Calu3 (cell line): ENCODE measurements at regions of chr22 and their contacts with region 1.

Region 1: DNA sequence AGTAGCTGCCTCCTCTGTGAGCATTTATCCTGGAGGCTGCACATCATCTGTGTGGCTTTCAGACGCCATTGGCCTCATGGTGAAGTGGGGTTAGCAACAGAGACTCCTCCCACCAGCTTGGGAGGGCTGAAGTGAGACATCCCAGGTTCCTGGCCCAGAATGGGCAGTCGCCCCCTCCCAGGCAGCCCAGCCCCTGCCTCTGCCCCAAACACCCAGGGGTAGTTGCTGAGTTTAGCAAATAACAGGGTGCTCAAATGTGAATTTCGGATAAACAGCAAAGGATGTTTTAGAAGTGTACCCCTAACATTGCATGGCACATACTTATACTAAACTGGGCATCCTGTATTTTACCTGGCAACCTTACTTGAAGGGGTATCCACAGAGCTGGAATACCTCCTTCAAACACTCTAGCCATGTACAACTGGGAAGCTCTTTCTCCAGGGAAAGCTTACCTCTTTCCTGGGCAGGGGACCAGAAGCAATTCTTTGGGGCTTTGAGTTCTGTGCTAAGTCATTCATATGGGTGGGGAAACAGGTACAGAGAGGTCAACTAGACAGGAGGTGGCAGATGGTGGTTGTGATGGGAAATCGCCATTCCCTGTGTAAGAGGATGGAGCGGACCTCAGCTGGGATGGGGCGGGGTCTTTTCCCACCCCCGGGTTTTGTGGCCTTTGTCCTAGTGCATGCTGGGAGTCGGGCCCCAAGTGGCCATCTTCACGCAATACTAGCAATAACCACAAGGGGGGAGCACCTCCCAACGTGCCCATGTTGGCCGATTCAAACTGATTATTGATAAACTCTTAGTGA is 19.3 kb downstream of the MTFP1 start:
- DNase-seq: peak; percentile 80
- H3K4me3 Mint-ChIP-seq: no peak overlapping the region
- H3K27ac Mint-ChIP-seq: peak overlapping the region; percentile 54
- H3K4me1 Mint-ChIP-seq: peaks cover 28% of the 10 kb centered on the region
- H3K27me3 Mint-ChIP-seq: no peaks in the 10 kb centered on the region
- CTCF ChIP-seq: peak; percentile 95

Region 2: GRCh38 chr22:30292069-30292835 is 152.6 kb before region 1 on chr22:
- CTCF ChIA-PET with region 1: no interaction called
- intact Hi-C with region 1: no loop called
- DNase-seq: no peak
- H3K4me3 Mint-ChIP-seq: no peak overlapping the region
- H3K27ac Mint-ChIP-seq: no peak overlapping the region
- H3K4me1 Mint-ChIP-seq: peaks cover 11% of the 10 kb centered on the region
- H3K27me3 Mint-ChIP-seq: no peaks in the 10 kb centered on the region
- CTCF ChIP-seq: no peak

Region 3: DNA sequence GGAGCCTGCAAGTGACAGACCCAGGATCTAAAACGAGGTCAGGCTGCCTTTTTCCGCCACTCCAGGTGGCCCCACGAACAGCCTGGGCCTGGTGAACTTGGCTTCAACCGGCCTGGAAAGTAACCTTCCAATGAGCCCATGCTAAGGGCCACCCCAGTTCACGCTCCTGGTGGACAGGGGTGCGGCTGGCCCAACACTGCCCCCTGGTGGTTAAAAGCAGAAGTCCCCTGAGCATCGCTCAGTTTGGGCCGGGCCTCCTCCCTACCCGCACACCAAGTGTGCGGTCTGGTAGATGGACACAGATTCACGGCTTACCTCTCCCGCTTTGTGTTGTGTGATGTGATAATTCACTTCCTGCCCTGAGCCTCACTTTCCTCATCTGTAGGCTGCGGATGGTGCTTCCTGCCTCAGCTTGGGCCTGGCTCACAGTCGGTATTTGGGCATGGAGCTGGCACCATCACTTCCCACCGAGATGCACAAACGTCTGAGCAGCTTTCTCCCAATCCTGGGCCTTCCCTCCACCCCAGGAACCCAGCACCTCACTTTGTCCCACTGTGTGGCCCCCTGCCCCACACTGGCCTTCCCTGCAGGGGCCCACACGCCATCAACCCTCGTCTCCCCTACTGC is 40.6 kb after region 1 on chr22:
- CTCF ChIA-PET with region 1: interaction called, 11 read pairs
- intact Hi-C with region 1: loop called (anchors 1 kb)
- DNase-seq: peak; percentile 78
- H3K4me3 Mint-ChIP-seq: no peak overlapping the region
- H3K27ac Mint-ChIP-seq: no peak overlapping the region
- H3K4me1 Mint-ChIP-seq: peaks cover 16% of the 10 kb centered on the region
- H3K27me3 Mint-ChIP-seq: peaks cover 2% of the 10 kb centered on the region
- CTCF ChIP-seq: peak; percentile 97

Region 4: DNA sequence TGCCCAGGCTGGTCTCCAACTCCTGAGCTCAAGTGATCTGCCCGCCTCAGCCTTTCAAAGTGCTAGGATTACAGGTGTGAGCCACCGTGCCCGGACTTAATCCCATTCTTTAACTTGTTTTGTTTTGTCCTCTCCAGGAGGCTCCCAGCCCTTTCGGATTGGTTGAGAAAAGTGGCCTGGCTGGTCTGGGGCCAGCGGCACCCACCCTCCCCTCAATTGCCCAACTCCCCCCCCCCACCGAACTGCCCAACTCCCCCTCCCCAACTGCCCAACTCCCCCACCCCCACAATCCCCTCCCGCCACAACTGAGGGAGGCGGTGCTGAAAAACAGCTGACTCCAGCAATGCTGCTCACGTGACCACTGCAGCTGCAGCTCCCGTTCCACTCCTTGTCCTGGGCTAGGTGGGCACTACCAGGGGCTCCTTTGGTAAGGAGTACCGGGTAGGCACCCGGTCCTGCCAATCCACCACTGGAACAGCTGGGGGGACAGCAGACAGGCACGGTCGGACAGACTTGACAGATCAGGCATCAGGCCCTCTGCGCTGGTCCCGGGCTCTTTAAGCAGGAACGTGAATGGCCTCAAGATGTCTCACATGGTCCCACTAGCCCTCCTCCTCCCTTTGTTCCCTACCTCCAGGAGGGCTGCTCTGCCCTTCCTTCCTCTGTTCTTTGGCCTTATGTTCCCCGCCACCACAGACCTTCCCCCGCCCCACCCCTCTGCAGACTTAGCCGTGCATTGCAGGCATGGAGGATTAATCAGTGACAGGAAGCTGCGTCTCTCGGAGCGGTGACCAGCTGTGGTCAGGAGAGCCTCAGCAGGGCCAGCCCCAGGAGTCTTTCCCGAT is 161.8 kb after region 1 on chr22 and contains the start of gene TCN2:
- CTCF ChIA-PET with region 1: interaction called, 13 read pairs
- intact Hi-C with region 1: loop called (anchors 2 kb)
- DNase-seq: peak; percentile 68
- H3K4me3 Mint-ChIP-seq: peak within 1 kb of the TSS; percentile 79
- H3K27ac Mint-ChIP-seq: peak within 1 kb of the TSS; percentile 82
- H3K4me1 Mint-ChIP-seq: peaks cover 38% of the 10 kb centered on the region
- H3K27me3 Mint-ChIP-seq: no peaks in the 10 kb centered on the region
- CTCF ChIP-seq: no peak
- total RNA-seq, gene TCN2: 11.0 and 25.9 TPM in 2 replicates

Region 5: GRCh38 chr22:30754971-30755756 is 310.3 kb after region 1 on chr22:
- CTCF ChIA-PET with region 1: interaction called, 7 read pairs
- intact Hi-C with region 1: loop called (anchors 5 kb)
- DNase-seq: peak; percentile 68
- H3K4me3 Mint-ChIP-seq: no peak overlapping the region
- H3K27ac Mint-ChIP-seq: no peak overlapping the region
- H3K4me1 Mint-ChIP-seq: no peaks in the 10 kb centered on the region
- H3K27me3 Mint-ChIP-seq: no peaks in the 10 kb centered on the region
- CTCF ChIP-seq: peak; percentile 64